ENCODE measurements at regions of chr19 and their contacts with region 1.

Region 1: DNA sequence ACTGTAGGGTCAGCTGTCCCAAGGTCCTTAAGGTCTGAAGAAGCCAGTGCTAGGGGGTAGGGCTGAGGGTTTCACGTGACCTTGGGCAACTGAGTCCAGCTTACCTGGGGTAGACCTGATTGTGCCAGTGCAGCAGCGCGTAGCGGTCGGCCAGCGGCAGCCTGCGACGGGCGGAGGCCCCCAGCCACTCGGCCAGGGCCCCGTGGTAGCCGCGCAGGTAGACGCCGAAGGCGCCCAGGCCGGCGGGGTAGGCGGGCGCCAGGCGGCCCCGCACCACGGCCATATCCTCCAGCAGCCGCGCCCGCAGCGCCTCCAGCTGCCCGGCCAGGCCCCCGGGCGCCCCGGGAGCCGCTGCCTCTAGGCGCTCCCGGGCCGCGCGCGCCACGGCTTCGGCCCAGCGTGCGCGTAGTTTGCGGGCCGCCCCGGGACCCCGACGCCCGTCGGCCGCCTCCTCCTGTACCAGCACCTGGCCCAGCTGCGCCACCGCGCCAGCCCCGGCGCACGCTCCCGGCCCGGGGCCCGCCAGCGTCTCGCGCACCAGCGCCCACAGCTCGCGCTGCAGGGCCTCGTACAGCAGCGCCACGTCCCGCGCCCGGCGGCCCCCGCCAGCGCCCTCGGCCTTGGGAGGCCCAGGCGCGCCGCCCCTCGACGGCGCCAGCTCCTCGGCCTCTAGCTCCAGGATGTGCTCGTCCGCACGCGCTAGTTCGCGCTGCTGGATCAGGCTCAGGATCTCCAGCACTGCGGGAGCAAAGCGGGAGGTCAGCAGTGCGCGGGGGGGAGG is 10.9 kb downstream of the EXOC3L2 start:
- DNase-seq: no peak
- H3K4me3 ChIP-seq: no peak overlapping the region
- H3K27ac ChIP-seq: no peak overlapping the region
- H3K4me1 ChIP-seq: no peaks in the 10 kb centered on the region
- H3K27me3 ChIP-seq: no peaks in the 10 kb centered on the region
- CTCF ChIP-seq: no peak
- POLR2A ChIP-seq: no peak

Region 2: DNA sequence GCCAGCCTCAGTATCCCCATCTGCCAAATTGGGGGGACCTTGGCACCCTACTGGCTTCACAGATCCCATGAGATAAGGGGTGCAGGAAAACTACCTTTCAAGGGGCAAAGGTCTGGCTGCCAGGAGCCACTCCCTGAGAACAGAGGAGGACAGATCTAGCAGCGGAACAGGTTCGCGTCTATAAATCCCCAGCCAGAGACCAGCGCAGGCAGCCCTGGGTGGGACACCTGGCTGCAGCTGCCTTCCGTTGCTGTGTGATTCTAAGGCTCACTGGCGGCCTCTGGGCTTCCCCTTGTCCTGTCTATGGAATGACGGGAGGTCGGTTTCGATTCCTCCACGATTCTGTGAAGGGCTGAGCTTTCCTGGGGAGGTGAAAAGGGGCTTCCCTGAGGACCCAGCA is 225.7 kb before region 1 on chr19:
- intact Hi-C with region 1: no loop called
- DNase-seq: no peak
- H3K4me3 ChIP-seq: no peak overlapping the region
- H3K27ac ChIP-seq: no peak overlapping the region
- H3K4me1 ChIP-seq: no peaks in the 10 kb centered on the region
- H3K27me3 ChIP-seq: no peaks in the 10 kb centered on the region
- CTCF ChIP-seq: no peak
- POLR2A ChIP-seq: no peak

Region 3: DNA sequence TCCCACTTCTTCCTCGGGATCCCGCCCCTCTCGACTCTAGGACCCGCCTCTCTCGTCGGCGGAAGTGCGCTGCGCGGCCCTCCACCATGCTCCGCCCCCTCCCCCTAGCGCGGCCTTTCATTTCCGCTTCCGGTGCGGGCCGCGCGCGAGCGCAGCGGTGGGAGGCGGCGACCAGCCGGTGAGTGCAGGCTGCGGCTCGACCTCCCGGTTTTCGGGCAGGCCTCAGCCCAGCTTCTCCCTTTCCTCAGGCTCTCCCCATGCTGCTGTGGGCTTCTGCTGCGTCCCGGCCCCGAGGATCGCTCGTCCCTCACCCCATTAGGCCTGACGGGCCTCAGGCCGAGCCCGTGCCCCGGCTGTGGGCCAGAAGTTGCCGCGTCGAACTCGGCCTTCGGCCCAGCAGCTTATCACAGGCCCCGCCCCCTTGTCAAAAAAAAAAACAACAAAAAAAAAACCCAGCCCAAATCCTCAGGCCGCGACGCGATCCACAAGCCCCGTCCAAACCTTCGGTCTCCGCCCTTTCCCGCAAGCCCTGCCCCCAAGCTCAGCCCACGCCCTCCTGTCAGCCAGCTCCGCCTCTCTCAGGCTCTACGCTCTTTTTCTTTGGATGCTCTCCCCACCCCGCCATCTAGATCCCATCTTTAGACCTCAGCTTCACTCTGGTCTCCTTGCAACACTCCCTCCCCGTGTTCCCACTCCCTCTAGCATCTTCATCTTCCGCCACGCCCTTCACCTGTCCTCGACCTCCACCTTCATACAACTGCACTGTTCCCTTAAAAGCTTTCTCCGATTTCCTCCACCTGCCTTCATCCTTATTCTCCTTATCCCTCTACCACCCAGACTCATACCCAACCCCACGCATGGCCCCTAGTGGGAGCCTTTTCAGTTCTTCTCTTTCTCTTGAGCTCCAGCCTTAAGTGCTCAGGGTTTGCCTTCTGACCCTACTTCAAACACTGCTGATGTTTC is 195.1 kb before region 1 on chr19 and contains the start of gene CLASRP:
- intact Hi-C with region 1: no loop called
- DNase-seq: no peak
- H3K4me3 ChIP-seq: peak within 1 kb of the TSS; percentile 67 to 85
- H3K27ac ChIP-seq: peak within 1 kb of the TSS; percentile 87
- H3K4me1 ChIP-seq: peaks cover 46% of the 10 kb centered on the region
- H3K27me3 ChIP-seq: no peaks in the 10 kb centered on the region
- CTCF ChIP-seq: no peak
- POLR2A ChIP-seq: peak in 1 of 2 donors; percentile 91
- total RNA-seq, gene CLASRP: 93.5 TPM

Region 4: DNA sequence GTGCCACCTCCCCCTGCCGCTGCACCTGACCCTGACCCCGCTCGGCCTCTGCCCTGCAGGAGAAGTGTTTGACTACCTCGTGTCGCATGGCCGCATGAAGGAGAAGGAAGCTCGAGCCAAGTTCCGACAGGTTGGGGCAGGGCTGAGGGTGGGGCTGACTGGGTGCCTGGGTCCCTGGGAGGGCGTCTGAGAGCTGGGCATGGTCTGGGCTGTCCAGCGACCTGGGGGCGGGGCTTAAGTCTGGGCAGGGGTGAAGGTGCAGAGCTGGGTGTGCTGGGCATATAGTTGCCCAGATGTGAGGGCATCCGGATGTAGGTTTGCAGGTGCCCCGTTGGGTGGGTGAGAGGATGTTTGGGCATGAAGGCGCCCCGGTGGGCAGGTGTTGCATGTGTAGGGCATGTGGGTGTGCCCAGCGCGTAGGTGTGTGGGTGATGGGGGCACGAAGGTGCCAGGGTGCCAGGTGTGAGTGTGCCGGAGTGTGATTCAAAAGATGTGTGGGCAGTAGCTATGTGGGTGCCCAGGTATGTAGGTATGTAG is 30.6 kb after region 1 on chr19:
- intact Hi-C with region 1: loop called (anchors 2 kb)
- DNase-seq: no peak
- H3K4me3 ChIP-seq: no peak overlapping the region
- H3K27ac ChIP-seq: no peak overlapping the region
- H3K4me1 ChIP-seq: no peaks in the 10 kb centered on the region
- H3K27me3 ChIP-seq: no peaks in the 10 kb centered on the region
- CTCF ChIP-seq: no peak
- POLR2A ChIP-seq: no peak

Measured in vagina (tissue), 2 donors.